ENCODE measurements at regions of chr9 and their contacts with region 1.

Region 1: GRCh38 chr9:137551651-137552384 is at the start of gene MRPL41:
- DNase-seq: peak; percentile 92
- H3K4me3 Mint-ChIP-seq: peak within 1 kb of the TSS; percentile 91
- H3K27ac Mint-ChIP-seq: peak within 1 kb of the TSS; percentile 82
- H3K4me1 Mint-ChIP-seq: peaks cover 14% of the 10 kb centered on the region
- H3K27me3 Mint-ChIP-seq: peaks cover 3% of the 10 kb centered on the region
- total RNA-seq, gene MRPL41: 53.8 and 56.0 TPM in 2 replicates

Region 2: GRCh38 chr9:137150617-137151457 is 401.0 kb before region 1 on chr9:
- intact Hi-C with region 1: loop called (anchors 5 kb)
- DNase-seq: peak; percentile 60
- H3K4me3 Mint-ChIP-seq: no peak overlapping the region
- H3K27ac Mint-ChIP-seq: no peak overlapping the region
- H3K4me1 Mint-ChIP-seq: peaks cover 4% of the 10 kb centered on the region
- H3K27me3 Mint-ChIP-seq: peaks cover 2% of the 10 kb centered on the region

Region 3: DNA sequence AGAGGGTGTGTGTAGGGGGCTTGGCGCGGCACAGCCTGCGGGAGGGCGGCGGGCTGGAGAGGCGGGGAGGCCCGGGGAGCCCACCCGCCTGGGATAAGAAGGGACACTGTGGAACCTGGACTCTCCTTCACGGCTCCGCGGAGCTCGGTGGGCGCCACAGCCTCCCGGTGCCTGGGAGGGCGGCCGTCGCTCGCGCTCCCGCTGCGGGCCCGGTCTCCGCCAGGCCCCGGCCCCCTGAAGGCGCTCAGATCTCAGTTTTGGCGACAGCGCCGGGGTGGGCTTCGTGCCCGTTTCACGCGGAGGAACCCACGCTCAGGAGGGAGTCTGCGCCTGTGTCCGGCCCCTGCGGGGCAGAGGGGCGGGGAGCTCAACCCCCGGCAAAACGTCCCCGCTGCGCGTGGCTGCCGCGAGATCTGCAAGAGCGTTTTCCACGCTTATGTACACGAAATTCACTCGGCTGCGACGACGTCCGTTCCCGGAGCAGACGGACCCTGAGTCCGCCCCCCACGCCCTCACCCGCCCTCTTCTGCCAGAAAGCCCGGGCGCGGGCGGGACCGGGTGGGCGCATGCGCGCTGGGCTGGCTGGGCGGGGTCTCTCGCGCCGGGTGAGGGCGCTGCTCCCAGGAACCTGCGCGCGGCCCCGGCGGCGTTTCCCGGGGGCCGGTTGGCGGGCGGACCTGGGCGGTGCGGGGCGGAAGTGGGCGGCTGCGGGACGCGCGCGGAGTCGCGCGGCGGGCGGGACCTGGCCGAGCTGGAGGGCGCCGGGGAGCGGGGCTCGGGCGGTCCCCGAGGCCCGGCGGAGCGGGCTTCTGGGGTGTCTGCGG is 297.0 kb before region 1 on chr9 and contains the start of gene NELFB:
- intact Hi-C with region 1: loop called (anchors 1 kb)
- DNase-seq: peak; percentile 97
- H3K4me3 Mint-ChIP-seq: peak within 1 kb of the TSS; percentile 90
- H3K27ac Mint-ChIP-seq: peak within 1 kb of the TSS; percentile 87
- H3K4me1 Mint-ChIP-seq: peaks cover 5% of the 10 kb centered on the region
- H3K27me3 Mint-ChIP-seq: peaks cover 2% of the 10 kb centered on the region
- total RNA-seq, gene NELFB: 70.8 and 72.1 TPM in 2 replicates

Region 4: DNA sequence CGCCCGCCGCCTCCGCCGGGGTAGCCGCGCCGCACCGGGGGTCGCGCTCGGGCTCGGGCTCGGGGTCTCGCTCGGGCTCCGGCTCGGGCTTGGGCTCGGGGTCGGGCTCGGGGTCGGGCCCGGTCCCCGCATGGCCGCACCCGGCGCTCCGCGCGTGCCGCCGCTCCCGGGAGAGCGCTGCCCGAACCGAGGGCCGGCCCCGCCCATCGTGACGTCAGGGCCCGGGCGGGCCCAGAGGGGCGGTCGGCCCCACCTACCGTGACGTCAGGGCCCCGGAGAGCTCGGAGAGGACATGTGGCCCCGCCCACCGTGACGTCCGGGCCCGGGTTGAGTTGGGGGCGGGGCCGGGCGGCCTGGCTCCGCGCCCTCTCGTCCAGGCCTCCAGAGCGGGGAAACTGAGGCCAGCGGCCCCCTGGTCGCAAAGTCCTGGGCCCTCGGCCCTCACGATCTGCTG is 92.6 kb before region 1 on chr9 and contains the start of gene NSMF:
- intact Hi-C with region 1: loop called (anchors 1 kb)
- DNase-seq: peak; percentile 95
- H3K4me3 Mint-ChIP-seq: peak within 1 kb of the TSS; percentile 7
- H3K27ac Mint-ChIP-seq: peak within 1 kb of the TSS; percentile 65
- H3K4me1 Mint-ChIP-seq: peaks cover 10% of the 10 kb centered on the region
- H3K27me3 Mint-ChIP-seq: no peaks in the 10 kb centered on the region
- total RNA-seq, gene NSMF: 57.2 and 58.9 TPM in 2 replicates

Region 5: DNA sequence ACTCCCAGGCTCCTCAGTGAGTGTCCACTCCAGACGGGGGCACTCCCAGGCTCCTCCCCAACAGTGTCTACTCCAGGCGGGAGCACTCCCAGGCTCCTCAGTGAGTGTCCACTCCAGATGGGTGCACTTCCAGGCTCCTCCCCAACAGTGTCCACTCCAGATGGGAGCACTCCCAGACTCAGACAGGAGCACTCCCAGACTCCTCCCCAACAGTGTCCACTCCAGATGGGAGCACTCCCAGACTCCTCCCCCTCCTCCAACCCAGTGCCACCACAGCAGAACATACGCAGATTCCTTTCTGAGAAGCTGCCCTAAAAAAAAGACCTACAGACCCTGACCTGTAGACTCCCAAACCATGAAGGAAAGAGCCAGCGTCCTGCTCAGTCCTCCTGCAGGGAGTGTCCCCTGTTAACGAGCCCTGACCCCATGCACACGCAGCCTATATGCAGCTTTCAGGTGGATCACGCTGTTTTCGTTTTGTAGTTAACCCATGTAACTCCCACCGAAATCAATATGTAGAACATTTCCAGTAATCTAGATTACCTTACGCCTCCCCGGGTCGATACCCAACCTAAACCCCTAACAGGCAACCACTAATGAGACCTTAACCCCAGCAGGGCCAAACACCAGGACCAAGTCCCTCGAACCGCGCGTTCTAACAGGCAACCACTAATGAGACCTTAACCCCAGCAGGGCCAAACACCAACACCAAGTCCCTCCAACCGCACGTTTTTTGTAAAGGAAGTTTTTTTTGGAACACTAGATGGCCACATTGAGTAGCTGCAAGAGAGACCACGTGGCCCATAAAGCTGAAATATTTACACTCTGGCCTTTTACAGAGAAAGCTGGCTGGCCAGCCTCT is 17.3 kb before region 1 on chr9:
- intact Hi-C with region 1: loop called (anchors 1 kb)
- DNase-seq: no peak
- H3K4me3 Mint-ChIP-seq: peak overlapping the region; percentile 11
- H3K27ac Mint-ChIP-seq: peak overlapping the region; percentile 41
- H3K4me1 Mint-ChIP-seq: peaks cover 41% of the 10 kb centered on the region
- H3K27me3 Mint-ChIP-seq: no peaks in the 10 kb centered on the region

Region 6: DNA sequence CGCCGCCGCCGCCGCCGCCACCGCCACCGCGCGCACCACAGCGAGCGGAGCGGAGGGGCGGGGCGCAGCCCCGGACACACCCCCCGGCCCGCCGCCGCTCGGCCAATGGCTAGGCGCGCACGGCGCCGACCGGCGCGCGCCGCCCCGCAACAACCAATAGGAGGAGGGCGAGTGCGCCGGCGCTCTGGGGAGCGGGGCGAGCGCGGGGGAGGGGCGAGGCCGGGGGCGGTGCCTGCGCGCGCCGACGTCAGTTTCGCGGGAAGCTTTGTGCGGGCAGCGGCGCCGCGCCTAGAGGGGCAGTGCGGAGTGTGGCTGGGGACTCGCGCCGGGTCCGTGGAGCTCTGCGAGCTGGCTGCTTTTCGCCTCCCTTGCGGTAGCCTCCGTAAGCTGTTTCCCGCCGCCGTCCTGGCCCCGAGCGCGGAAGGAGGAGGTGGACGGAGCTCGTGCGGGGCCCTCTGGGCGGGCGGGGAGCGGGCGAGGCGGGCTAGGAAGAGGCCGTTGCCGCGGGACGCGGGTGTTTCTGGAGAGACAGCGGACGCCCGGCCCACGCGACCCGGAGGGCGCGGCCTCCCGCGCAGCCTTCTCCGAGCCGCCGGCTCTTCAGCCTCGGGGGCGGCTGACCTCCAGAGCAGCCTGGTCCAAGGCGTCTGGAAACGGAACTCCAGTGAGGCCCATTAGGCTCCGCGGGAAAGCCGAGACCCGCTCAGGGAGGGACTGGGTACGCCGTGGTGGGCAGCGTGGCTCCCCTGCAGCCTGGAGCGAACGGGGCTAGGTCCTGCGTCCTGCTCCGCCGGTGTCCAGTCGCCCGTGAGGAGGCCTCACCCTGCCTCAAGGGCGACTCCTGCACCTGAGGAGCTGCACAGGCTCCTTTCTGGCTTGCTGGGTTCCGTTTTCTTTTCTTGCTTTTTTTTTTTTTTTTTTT is 38.9 kb after region 1 on chr9 and contains the start of gene ZMYND19:
- intact Hi-C with region 1: loop called (anchors 1 kb)
- DNase-seq: peak; percentile 90
- H3K4me3 Mint-ChIP-seq: peak within 1 kb of the TSS; percentile 99
- H3K27ac Mint-ChIP-seq: peak within 1 kb of the TSS; percentile 97
- H3K4me1 Mint-ChIP-seq: peaks cover 21% of the 10 kb centered on the region
- H3K27me3 Mint-ChIP-seq: peaks cover 1% of the 10 kb centered on the region
- total RNA-seq, gene ZMYND19: 88.2 and 94.9 TPM in 2 replicates

Region 7: GRCh38 chr9:137618105-137619067 is 66.6 kb after region 1 on chr9 and contains the start of gene EHMT1:
- intact Hi-C with region 1: loop called (anchors 1 kb)
- DNase-seq: peak; percentile 91
- H3K4me3 Mint-ChIP-seq: peak within 1 kb of the TSS; percentile 90
- H3K27ac Mint-ChIP-seq: peak within 1 kb of the TSS; percentile 92
- H3K4me1 Mint-ChIP-seq: peaks cover 29% of the 10 kb centered on the region
- H3K27me3 Mint-ChIP-seq: no peaks in the 10 kb centered on the region
- total RNA-seq, gene EHMT1: 97.0 and 98.1 TPM in 2 replicates

Region 8: DNA sequence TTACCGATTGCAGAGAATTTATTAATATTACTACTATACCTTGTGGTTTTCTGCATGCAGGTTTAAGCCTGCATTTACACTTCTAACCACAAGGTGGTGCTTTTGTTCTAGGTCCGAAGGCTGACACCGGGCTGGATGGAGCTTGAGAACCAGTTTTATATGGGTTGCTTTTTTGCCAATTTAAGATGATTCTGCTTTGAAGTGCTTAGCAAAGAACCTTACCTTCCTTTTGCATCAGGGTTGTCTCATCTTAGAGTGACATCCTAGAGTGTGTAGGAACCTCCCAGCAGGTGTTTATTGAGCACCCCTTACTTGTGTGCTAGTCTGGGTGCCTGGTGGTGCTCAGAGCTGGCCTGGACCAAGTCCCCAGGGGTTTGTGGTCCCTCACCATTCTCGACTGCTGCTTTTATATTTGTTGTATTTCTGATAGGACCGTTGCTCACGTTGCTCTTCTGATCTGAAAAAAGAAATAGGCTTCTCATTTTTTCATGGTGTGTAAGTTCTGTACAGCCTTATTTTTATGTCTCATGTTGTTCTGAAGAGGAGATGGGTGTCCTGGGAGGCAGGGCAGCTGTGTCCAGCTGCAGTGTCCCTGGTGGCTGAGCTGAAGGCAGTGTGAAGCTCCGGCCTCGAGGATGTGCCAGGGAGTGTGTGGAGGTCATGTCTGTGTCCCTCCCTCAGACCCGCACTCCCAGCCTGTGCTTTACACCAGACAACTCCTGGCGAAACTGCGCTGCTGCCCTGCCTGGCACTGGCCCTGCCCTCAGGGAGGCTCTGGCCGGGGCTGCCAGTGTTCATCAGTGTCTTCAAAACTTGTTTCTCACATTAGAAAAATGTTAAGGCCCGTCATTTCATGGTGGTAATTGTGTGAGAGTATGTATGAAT is 121.3 kb after region 1 on chr9:
- intact Hi-C with region 1: no loop called
- DNase-seq: peak; percentile 8
- H3K4me3 Mint-ChIP-seq: no peak overlapping the region
- H3K27ac Mint-ChIP-seq: no peak overlapping the region
- H3K4me1 Mint-ChIP-seq: peaks cover 13% of the 10 kb centered on the region
- H3K27me3 Mint-ChIP-seq: no peaks in the 10 kb centered on the region

Region 9: GRCh38 chr9:137689745-137690529 is 138.1 kb after region 1 on chr9:
- intact Hi-C with region 1: no loop called
- DNase-seq: no peak
- H3K4me3 Mint-ChIP-seq: no peak overlapping the region
- H3K27ac Mint-ChIP-seq: no peak overlapping the region
- H3K4me1 Mint-ChIP-seq: peaks cover 12% of the 10 kb centered on the region
- H3K27me3 Mint-ChIP-seq: no peaks in the 10 kb centered on the region

Region 10: DNA sequence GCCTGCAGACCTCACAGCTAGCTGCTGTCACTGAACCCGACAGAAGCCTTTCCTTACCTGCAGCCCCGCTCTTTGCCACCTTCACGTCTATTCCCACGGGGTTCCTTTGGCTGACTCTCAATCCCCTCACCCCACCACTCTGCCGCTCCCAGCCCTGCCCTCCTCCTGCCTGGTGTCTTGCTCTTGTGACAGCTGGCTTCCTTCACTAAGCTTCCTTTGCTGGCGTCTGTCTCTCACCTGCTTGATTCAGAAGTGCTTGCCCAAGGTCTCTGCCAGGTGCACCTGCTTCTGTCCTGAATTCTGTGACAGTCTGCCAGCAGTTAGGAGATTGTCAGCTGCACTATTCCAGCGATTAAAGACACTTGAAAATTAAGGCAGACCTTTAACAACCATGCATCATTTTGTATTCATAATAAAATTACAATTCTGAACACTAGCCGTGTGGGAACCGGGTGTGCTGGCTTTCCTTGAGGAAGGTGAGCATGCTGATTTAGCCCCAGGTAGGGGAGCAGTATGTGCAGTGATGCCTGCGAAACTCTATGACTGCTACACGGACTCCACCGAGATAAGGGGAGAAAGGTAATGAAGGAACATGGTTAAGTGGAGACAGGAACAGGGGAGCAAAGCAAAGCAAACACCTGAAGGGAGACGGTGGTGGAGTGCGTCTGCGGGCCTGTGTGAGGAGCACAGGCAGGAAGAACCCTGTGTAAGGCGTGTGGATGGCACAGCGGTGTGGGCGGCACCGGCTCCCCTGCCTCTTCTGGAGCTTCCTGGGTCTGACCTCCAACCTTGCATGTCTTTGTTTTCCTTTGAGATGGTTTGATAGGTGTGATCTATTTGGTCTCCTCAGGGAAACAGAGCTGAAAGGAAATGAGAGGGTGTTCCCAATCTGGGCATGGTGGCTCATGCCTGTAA is 245.6 kb after region 1 on chr9:
- intact Hi-C with region 1: no loop called
- DNase-seq: no peak
- H3K4me3 Mint-ChIP-seq: no peak overlapping the region
- H3K27ac Mint-ChIP-seq: no peak overlapping the region
- H3K4me1 Mint-ChIP-seq: no peaks in the 10 kb centered on the region
- H3K27me3 Mint-ChIP-seq: no peaks in the 10 kb centered on the region